ENCODE measurements at regions of chr12 and their contacts with region 1.

Region 1: DNA sequence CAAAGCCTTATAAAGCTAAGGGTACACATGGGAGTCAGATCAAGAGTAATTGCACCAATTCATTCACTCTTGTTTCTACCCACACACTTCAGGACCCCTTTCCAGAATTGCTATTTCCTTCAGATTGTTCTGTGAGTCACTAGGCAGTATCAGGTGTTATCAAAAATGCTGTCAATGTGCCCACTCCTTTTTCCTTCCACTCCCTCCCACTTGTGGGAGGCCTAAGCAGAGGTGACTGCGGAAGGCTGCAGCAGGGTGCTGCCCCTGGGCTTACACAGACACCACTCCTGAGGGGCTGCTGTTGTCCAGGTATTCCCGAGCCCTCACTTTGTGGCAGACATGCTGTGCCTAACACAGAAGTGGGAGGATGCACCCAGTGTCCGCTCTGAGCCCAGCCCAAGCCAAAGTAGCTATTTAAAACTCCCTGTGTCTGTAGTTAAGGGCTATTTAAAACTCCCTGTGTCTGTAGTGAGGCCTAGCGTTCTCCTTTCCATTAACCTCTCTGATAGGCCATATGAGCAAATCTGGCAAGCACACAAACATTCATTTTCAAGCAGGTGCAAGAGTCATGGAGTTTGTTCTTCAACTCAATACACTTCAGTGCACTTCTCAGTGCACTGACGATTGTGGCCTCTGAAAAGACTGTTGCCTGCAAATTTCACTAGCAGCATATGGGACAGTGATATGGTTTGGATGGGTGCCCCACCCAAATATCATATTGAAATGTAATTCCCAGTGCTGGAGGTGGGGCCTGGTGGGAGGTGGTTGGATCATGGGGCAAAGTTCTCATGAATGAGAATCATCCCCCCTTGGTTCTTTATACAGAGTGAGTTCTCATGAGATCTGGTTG is 117.8 kb downstream of the PHLDA1 start:
- DNase-seq: no peak
- H3K4me3 Mint-ChIP-seq: no peak overlapping the region
- H3K27ac Mint-ChIP-seq: peak overlapping the region; percentile 79
- H3K4me1 Mint-ChIP-seq: peaks cover 34% of the 10 kb centered on the region
- H3K27me3 Mint-ChIP-seq: peaks cover 1% of the 10 kb centered on the region

Region 2: GRCh38 chr12:75816897-75817296 is 96.8 kb before region 1 on chr12:
- intact Hi-C with region 1: loop called (anchors 2 kb)
- DNase-seq: no peak
- H3K4me3 Mint-ChIP-seq: no peak overlapping the region
- H3K27ac Mint-ChIP-seq: no peak overlapping the region
- H3K4me1 Mint-ChIP-seq: peaks cover 29% of the 10 kb centered on the region
- H3K27me3 Mint-ChIP-seq: peaks cover 4% of the 10 kb centered on the region

Region 3: DNA sequence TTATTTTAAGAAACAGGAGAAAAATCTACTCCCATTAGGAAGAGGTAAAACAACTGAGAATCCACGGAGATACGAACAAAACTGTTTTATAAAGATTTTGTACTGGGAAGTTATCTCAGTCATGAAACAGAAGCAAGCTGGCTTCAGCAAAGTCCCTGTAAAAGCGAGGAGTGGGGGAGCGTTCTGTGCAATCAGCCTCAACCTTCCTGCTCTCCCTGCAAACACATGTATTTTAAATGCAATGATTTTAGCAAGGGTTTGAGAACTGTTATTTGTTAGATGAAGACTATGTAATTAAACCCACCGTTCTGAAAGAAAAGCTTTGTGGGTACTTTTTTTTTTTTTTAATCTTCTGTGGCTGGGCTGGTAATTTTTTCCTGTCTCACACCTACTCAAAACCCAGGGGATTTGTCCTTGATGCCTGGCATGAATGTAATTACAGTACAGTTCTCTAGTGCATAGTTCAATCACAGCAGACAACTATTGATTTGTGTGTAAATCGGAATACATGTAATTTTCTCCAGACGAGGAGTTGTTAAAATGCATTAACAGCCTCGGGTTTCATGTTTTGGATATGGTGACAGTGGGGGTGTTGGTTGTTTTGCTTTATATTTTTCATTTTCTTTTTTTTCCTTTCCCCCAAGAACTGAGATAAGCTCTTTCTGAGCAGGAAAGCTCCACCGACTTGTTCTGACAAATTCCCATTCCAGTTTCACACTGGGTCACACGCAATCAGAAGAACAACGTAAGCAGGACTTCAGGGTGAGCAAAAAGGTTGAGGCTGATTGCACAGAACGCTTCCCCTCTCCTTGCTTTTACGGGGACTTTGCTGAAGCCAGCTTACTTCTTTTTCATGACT is 35.7 kb before region 1 on chr12:
- intact Hi-C with region 1: loop called (anchors 2 kb)
- DNase-seq: no peak
- H3K4me3 Mint-ChIP-seq: no peak overlapping the region
- H3K27ac Mint-ChIP-seq: no peak overlapping the region
- H3K4me1 Mint-ChIP-seq: peaks cover 25% of the 10 kb centered on the region
- H3K27me3 Mint-ChIP-seq: peaks cover 32% of the 10 kb centered on the region

Region 4: GRCh38 chr12:75923964-75924666 is 10.4 kb after region 1 on chr12:
- intact Hi-C with region 1: loop called (anchors 1 kb)
- DNase-seq: no peak
- H3K4me3 Mint-ChIP-seq: no peak overlapping the region
- H3K27ac Mint-ChIP-seq: peak overlapping the region; percentile 67
- H3K4me1 Mint-ChIP-seq: peaks cover 26% of the 10 kb centered on the region
- H3K27me3 Mint-ChIP-seq: peaks cover 1% of the 10 kb centered on the region

Region 5: DNA sequence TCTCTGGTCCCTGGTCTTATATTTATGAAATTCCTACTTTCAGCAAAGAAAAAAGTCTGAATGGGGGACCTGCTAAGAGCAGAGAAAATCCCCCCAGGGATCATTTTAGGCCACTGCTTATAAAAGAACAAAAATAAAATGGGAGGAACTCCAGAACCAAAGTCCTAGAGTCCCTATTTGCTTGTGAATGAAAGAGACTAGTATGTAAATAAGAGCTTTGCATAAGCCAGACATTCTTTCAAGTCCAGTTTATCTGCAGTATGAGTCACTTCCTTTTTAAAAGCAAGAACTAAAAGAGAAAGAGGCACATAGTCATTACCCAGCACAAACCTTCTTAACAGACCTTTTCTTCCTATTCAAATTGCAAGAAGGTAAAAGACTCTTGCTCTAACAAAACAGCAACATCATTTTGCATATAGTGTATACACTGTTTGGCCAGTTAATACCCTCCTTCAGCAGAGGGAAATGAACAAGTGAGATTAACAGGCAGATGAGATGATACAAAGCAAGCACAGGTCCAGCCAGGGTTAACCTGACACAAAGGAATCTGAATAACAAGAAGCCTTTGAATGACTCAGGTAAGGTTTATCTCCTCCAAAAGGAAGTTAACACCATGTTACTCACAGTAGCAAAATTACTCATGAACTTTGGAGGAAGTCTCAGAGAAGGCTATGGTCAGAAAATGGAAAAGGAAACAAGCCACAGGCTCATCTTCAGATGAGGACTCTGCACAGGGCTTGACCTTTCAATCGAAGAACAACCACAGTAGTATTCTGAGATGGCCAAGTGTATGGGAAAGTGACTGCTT is 30.6 kb after region 1 on chr12:
- intact Hi-C with region 1: loop called (anchors 1 kb)
- DNase-seq: peak; percentile 27
- H3K4me3 Mint-ChIP-seq: peak overlapping the region; percentile 65
- H3K27ac Mint-ChIP-seq: peak overlapping the region; percentile 98
- H3K4me1 Mint-ChIP-seq: peaks cover 30% of the 10 kb centered on the region
- H3K27me3 Mint-ChIP-seq: no peaks in the 10 kb centered on the region

Region 6: GRCh38 chr12:75994186-75994731 is 80.5 kb after region 1 on chr12:
- intact Hi-C with region 1: loop called (anchors 1 kb)
- DNase-seq: no peak
- H3K4me3 Mint-ChIP-seq: peak overlapping the region; percentile 5
- H3K27ac Mint-ChIP-seq: peak overlapping the region; percentile 88
- H3K4me1 Mint-ChIP-seq: peaks cover 49% of the 10 kb centered on the region
- H3K27me3 Mint-ChIP-seq: no peaks in the 10 kb centered on the region

Region 7: DNA sequence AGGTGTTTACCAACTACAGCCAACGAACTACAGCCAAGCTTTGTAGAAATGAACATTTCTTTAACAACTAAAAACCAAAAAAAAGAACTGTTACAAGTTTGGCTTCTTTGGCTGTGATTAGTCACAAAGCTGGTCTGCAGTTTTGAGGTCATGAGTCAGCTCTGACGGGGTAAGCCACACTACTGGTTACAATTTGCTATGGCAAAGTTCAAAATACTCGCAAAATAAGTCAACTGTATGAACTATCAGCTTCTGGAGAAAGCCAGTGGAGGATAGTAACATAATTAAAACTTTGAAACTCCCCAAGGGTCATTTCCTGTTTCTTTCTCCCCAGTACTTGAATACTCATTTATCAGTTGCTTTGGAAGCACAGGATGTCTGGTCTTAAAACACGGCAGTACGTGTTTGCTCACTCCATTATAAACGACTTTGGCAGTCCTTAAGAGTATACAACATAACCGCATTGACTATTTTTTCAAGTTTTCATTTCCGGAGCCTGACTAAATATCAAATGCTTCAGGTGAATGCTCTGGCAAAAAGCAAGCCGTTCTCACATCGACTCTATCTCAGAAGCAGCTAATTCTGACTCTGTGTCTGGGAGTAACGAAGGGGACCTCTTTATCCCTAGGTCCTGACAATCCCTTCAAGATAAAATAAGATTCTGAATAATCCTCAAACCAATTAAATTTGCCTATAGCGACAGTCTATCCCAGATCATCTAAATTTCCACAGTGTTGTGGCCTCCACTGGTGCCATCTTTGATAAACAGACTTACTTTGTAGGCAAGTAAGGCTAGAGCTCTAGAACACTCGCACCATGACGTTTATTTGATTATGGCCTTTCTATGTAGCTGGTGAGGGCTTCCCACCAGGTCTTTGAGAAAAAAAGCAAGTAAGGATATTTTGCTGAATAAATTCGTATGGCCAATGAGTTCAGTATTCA is 107.3 kb after region 1 on chr12:
- intact Hi-C with region 1: loop called (anchors 1 kb)
- DNase-seq: peak; percentile 68
- H3K4me3 Mint-ChIP-seq: peak overlapping the region; percentile 74
- H3K27ac Mint-ChIP-seq: peak overlapping the region; percentile 99
- H3K4me1 Mint-ChIP-seq: peaks cover 73% of the 10 kb centered on the region
- H3K27me3 Mint-ChIP-seq: no peaks in the 10 kb centered on the region